Heart left ventricle (tissue), 16 donors: ENCODE measurements at regions of chr4 and their contacts with region 1.

Region 1: DNA sequence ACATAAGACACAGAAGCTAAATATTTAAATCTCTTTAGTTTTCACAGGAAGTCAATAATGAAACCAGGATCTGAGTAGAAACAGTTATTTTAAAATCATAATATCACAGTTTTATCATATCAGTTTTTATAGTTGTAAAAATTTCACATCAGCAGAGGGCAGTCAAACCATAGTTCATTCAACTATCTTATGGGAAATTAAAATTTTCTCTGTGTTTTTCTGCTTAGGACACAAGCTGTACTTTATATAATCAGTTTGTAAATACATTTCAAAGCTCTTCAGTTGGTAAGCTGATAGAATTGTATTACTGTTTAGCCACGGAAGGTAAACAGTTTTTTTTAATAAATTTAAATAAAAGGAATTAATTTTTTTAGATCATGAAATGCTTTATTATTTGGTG is 204.8 kb upstream of the NUDT6 start:
- DNase-seq: no peak
- ATAC-seq: peak in 2 of 4 donors; percentile 49 to 63
- H3K4me3 ChIP-seq: no peak overlapping the region
- H3K27ac ChIP-seq: peak overlapping the region in 2 of 12 donors; percentile 25 to 48
- H3K4me1 ChIP-seq: peaks cover 0 to 12% (median 5%) of the 10 kb centered on the region in 12 donors
- H3K27me3 ChIP-seq: no peaks in the 10 kb centered on the region
- CTCF ChIP-seq: peak in 10 of 12 donors; percentile 24 to 70 (median 52)
- POLR2A ChIP-seq: no peak

Region 2: GRCh38 chr4:122992057-122992456 is 135.2 kb before region 1 on chr4:
- intact Hi-C with region 1: no loop called
- DNase-seq: no peak
- ATAC-seq: peak in 2 of 4 donors; percentile 42 to 58
- H3K4me3 ChIP-seq: no peak overlapping the region
- H3K27ac ChIP-seq: no peak overlapping the region
- H3K4me1 ChIP-seq: peaks cover 0 to 10% (median 7%) of the 10 kb centered on the region in 12 donors
- H3K27me3 ChIP-seq: no peaks in the 10 kb centered on the region
- CTCF ChIP-seq: no peak
- POLR2A ChIP-seq: no peak

Region 3: DNA sequence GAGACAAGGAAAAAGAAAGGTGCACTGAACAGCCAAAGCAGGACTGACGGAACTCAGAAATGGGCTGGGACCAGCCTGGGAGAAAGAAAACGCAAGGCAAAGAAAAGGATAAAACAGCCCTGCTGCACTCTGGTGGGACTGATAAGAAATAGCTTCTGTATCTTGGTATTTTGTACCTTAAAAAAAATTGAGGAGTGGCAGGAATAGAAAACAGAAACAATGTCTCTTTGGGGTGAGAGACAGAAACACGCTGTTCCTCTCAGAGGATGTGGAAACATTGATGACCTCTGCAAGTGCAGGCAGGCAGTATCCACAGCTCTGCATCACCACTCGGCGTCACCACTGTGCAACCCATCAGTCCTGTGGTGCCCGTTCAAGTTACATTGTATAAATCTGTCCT is 116.9 kb after region 1 on chr4:
- intact Hi-C with region 1: loop called in 2 of 10 experiments (anchors 5 kb)
- DNase-seq: peak; percentile 63 to 78 (median 73)
- ATAC-seq: peak; percentile 96 to 99 (median 97)
- H3K4me3 ChIP-seq: peak overlapping the region in 1 of 12 donors; percentile 22
- H3K27ac ChIP-seq: peak overlapping the region in 5 of 12 donors; percentile 12 to 72 (median 55)
- H3K4me1 ChIP-seq: peaks cover 0 to 45% (median 26%) of the 10 kb centered on the region in 12 donors
- H3K27me3 ChIP-seq: no peaks in the 10 kb centered on the region
- CTCF ChIP-seq: peak in 10 of 12 donors; percentile 11 to 64 (median 42)
- POLR2A ChIP-seq: peak in 1 of 2 donors; percentile 17

Region 4: GRCh38 chr4:123257591-123257990 is 130.4 kb after region 1 on chr4:
- intact Hi-C with region 1: no loop called
- DNase-seq: no peak
- ATAC-seq: no peak
- H3K4me3 ChIP-seq: no peak overlapping the region
- H3K27ac ChIP-seq: peak overlapping the region in 1 of 12 donors; percentile 4
- H3K4me1 ChIP-seq: peaks cover 0 to 33% (median 12%) of the 10 kb centered on the region in 12 donors
- H3K27me3 ChIP-seq: no peaks in the 10 kb centered on the region
- CTCF ChIP-seq: no peak
- POLR2A ChIP-seq: no peak

Region 5: GRCh38 chr4:123564758-123565346 is 437.6 kb after region 1 on chr4:
- intact Hi-C with region 1: loop called in 2 of 10 experiments (anchors 10 kb)
- DNase-seq: peak in 3 of 5 donors; percentile 34 to 60 (median 46)
- ATAC-seq: peak; percentile 86 to 95 (median 92)
- H3K4me3 ChIP-seq: no peak overlapping the region
- H3K27ac ChIP-seq: no peak overlapping the region
- H3K4me1 ChIP-seq: peaks cover 0 to 14% (median 5%) of the 10 kb centered on the region in 12 donors
- H3K27me3 ChIP-seq: no peaks in the 10 kb centered on the region
- CTCF ChIP-seq: peak; percentile 63 to 87 (median 76)
- POLR2A ChIP-seq: no peak

Region 6: DNA sequence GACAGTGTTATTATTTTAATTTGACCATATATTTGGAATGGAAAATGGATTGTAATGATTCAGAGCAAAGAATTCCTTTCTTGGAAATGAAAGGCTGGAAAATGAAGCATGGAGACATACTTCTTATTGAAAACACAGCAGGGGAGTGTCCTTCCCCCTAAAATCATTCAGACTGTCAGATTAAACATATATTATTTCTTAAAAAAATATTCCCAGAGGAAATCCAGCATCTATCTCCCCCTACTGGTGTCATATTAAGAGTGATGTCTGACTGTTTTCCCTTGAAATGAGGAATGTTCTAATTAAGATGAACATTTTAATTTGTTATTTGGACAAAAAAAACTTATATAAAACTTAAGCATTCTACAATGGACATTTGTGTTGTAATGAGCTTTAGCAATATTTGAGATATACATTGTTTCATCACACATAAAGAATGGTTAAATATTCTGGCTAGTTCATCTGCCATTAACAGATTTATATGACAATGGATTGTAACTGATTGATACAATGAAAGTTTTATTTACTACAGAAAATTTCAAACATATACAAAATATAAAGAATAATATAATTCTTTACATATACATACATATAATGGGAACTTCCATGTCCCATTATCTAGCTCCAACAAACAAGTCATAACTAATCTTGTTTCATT is 534.0 kb after region 1 on chr4:
- intact Hi-C with region 1: loop called in 7 of 10 experiments (anchors 2 to 10 kb)
- DNase-seq: no peak
- ATAC-seq: no peak
- H3K4me3 ChIP-seq: no peak overlapping the region
- H3K27ac ChIP-seq: no peak overlapping the region
- H3K4me1 ChIP-seq: peaks cover 0 to 5% (median 0%) of the 10 kb centered on the region in 12 donors
- H3K27me3 ChIP-seq: no peaks in the 10 kb centered on the region
- CTCF ChIP-seq: peak; percentile 32 to 68 (median 50)
- POLR2A ChIP-seq: no peak